Left cardiac atrium (tissue), 4 donors: ENCODE measurements at regions of chr2 and their contacts with region 1.

Region 1: GRCh38 chr2:218357236-218358159 is 841 bp downstream of the CATIP start:
- DNase-seq: no peak
- ATAC-seq: no peak

Region 2: GRCh38 chr2:218301176-218301819 is 56.2 kb before region 1 on chr2:
- intact Hi-C with region 1: loop called (anchors 2 to 5 kb)
- DNase-seq: peak; percentile 83
- ATAC-seq: peak; percentile 73 to 84

Region 3: GRCh38 chr2:218395797-218396687 is 38.5 kb after region 1 on chr2:
- intact Hi-C with region 1: no loop called
- DNase-seq: peak; percentile 94
- ATAC-seq: peak; percentile 66 to 71